ENCODE measurements at regions of chr1 and their contacts with region 1.

Region 1: DNA sequence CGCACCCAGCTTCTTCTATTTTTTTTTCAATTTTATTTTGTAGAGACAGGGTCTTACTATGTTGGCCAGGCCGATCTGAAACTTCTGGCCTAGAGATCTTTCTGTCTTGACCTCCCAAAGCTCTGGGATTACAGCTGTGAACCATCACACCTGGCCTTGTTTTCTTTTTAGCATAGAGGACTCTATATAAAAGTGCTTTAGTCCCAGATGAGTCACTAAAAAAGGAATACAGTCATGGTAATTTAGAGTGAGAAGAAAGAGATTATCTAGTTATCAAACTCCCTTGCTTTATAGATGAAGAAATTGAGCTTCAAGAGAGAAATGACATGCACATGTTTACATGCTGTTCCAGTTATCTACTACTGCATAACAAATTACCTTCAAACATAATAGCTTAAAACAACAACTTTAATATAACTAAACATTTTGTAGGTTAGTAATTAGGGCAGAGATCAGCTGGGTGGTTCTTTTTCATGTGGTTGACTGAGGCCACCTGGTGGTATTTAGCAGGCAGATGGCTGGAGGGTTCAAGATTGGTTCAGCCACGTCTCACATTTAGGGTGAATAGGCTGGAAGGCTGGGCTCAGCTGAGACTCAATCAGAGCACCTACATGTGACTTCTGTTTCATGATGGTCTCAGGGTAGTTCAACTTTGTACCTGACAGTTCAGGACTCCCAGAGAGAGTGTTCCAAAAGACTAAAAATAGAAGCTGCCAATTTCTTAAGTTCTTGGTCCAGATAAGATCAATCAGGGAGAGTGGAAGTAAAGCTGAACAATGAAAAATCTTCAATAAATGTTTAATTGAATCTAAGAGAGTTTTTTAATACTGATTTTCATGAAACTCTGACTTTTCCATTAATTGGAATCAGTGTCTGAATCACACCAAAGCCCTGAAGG is 16.9 kb upstream of the MTF2 start:
- DNase-seq: peak in 1 of 2 donors; percentile 76
- ATAC-seq: peak; percentile 54 to 78 (median 78)
- H3K4me3 ChIP-seq: no peak overlapping the region
- H3K4me3 Mint-ChIP-seq: no peak overlapping the region
- H3K27ac ChIP-seq: no peak overlapping the region
- H3K27ac Mint-ChIP-seq: no peak overlapping the region
- H3K4me1 ChIP-seq: no peaks in the 10 kb centered on the region
- H3K4me1 Mint-ChIP-seq: no peaks in the 10 kb centered on the region
- H3K27me3 ChIP-seq: no peaks in the 10 kb centered on the region
- H3K27me3 Mint-ChIP-seq: peaks cover 16 to 21% of the 10 kb centered on the region in 2 donors
- CTCF ChIP-seq: no peak

Region 2: DNA sequence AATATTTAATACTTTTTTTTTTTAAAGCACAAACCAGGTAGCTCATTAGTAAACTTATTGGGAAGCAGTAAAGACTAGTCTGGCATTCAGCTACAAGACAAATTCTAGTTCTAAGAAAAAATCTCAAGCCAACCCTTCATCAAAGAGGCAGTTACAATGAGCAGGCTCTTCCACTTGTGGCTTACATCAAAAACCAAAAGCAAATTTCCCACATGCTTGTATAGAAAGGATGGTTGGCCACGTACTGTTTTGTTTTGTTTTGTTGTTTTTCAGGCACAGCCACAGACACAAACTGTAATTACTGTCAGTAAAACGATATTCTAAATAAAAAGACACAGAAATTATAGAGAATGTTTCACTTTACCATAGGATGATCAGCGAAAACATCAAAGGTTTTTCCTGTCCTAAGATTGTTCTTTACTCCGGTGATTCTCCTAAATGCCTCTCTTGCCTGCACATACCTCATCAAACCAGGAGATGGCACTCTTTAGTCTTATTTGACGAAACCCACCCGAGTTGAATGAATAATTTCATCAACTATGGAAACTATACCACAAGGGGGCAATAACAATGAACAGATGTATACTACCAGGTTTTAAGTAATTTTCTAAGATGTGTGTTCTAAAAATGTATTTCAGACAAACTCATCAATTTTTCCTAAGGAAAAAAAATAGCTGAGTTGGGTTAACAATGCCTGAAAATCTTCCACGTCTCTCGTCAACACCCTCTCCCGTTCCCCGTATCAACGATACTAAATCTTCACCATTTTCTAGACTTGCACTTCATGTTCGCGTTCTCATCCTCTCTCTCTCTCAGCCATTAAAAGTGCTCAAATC is 203.4 kb before region 1 on chr1:
- intact Hi-C with region 1: loop called (anchors 1 kb)
- DNase-seq: peak in 1 of 2 donors; percentile 88
- ATAC-seq: peak; percentile 97 to 99 (median 98)
- H3K4me3 ChIP-seq: no peak overlapping the region
- H3K4me3 Mint-ChIP-seq: peak overlapping the region; percentile 51
- H3K27ac ChIP-seq: no peak overlapping the region
- H3K27ac Mint-ChIP-seq: peak overlapping the region; percentile 22 to 81
- H3K4me1 ChIP-seq: no peaks in the 10 kb centered on the region
- H3K4me1 Mint-ChIP-seq: peaks cover 15 to 20% of the 10 kb centered on the region in 2 donors
- H3K27me3 ChIP-seq: no peaks in the 10 kb centered on the region
- H3K27me3 Mint-ChIP-seq: no peaks in the 10 kb centered on the region
- CTCF ChIP-seq: peak; percentile 97

Region 3: GRCh38 chr1:92975551-92976232 is 86.5 kb before region 1 on chr1:
- intact Hi-C with region 1: no loop called
- DNase-seq: no peak
- ATAC-seq: no peak
- H3K4me3 ChIP-seq: no peak overlapping the region
- H3K4me3 Mint-ChIP-seq: no peak overlapping the region
- H3K27ac ChIP-seq: peak overlapping the region; percentile 50
- H3K27ac Mint-ChIP-seq: peak overlapping the region in 1 of 2 donors; percentile 9
- H3K4me1 ChIP-seq: peaks cover 25% of the 10 kb centered on the region
- H3K4me1 Mint-ChIP-seq: peaks cover 4 to 20% of the 10 kb centered on the region in 2 donors
- H3K27me3 ChIP-seq: no peaks in the 10 kb centered on the region
- H3K27me3 Mint-ChIP-seq: no peaks in the 10 kb centered on the region
- CTCF ChIP-seq: no peak

Region 4: DNA sequence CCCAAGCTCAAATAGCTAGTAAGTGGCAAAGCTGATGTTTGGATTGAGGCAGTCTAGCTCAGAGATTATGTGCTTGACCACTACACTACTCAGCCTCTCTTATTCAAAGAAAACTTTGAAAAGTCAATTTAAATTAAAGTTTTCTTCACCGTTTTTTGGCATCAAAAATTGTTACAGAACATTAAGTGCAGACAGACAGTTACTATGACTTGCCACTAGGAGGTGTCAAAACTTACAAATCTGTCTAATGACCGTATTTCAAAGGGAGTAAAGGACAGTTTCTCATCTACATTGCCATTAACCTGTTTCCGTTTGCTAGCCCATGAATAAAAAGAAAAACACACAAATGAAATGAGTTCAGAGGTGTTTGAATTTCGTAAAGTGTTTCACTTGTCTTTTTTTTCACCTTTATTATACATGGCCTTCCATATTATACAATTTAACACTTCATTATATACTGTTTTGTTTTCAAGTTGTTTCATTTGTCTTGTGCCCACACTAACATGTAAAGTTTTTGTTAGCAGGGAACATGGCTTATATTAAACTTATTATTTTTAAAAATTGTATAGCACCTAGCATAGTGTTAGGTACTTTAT is 40.5 kb before region 1 on chr1:
- intact Hi-C with region 1: loop called (anchors 1 kb)
- DNase-seq: peak in 1 of 2 donors; percentile 73
- ATAC-seq: peak; percentile 78 to 91 (median 83)
- H3K4me3 ChIP-seq: no peak overlapping the region
- H3K4me3 Mint-ChIP-seq: no peak overlapping the region
- H3K27ac ChIP-seq: no peak overlapping the region
- H3K27ac Mint-ChIP-seq: no peak overlapping the region
- H3K4me1 ChIP-seq: no peaks in the 10 kb centered on the region
- H3K4me1 Mint-ChIP-seq: no peaks in the 10 kb centered on the region
- H3K27me3 ChIP-seq: no peaks in the 10 kb centered on the region
- H3K27me3 Mint-ChIP-seq: peaks cover 17 to 29% of the 10 kb centered on the region in 2 donors
- CTCF ChIP-seq: peak; percentile 92

Measured in natural killer cell (primary cell).